ENCODE measurements at regions of chr19 and their contacts with region 1.

Region 1: GRCh38 chr19:10106100-10106936 is at the start of gene PPAN:
- DNase-seq: peak; percentile 95 to 99 (median 98)
- ATAC-seq: peak; percentile 63
- H3K4me3 ChIP-seq: peak within 1 kb of the TSS; percentile 53 to 74
- H3K4me3 Mint-ChIP-seq: peak within 1 kb of the TSS; percentile 89
- H3K27ac ChIP-seq: peak within 1 kb of the TSS; percentile 91 to 93
- H3K27ac Mint-ChIP-seq: peak within 1 kb of the TSS; percentile 93
- H3K4me1 ChIP-seq: peaks cover 61% of the 10 kb centered on the region
- H3K4me1 Mint-ChIP-seq: peaks cover 57% of the 10 kb centered on the region
- H3K27me3 ChIP-seq: no peaks in the 10 kb centered on the region
- H3K27me3 Mint-ChIP-seq: no peaks in the 10 kb centered on the region
- CTCF ChIP-seq: no peak
- total RNA-seq, gene PPAN: 97.6 to 114 TPM

Region 2: GRCh38 chr19:8724276-8724675 is 1382.0 kb before region 1 on chr19:
- CTCF ChIA-PET with region 1: no interaction called
- POLR2A ChIA-PET with region 1: no interaction called
- intact Hi-C with region 1: no loop called
- DNase-seq: no peak
- ATAC-seq: no peak
- H3K4me3 ChIP-seq: no peak overlapping the region
- H3K4me3 Mint-ChIP-seq: no peak overlapping the region
- H3K27ac ChIP-seq: no peak overlapping the region
- H3K27ac Mint-ChIP-seq: no peak overlapping the region
- H3K4me1 ChIP-seq: no peaks in the 10 kb centered on the region
- H3K4me1 Mint-ChIP-seq: no peaks in the 10 kb centered on the region
- H3K27me3 ChIP-seq: no peaks in the 10 kb centered on the region
- H3K27me3 Mint-ChIP-seq: peaks cover 22% of the 10 kb centered on the region
- CTCF ChIP-seq: no peak

Region 3: DNA sequence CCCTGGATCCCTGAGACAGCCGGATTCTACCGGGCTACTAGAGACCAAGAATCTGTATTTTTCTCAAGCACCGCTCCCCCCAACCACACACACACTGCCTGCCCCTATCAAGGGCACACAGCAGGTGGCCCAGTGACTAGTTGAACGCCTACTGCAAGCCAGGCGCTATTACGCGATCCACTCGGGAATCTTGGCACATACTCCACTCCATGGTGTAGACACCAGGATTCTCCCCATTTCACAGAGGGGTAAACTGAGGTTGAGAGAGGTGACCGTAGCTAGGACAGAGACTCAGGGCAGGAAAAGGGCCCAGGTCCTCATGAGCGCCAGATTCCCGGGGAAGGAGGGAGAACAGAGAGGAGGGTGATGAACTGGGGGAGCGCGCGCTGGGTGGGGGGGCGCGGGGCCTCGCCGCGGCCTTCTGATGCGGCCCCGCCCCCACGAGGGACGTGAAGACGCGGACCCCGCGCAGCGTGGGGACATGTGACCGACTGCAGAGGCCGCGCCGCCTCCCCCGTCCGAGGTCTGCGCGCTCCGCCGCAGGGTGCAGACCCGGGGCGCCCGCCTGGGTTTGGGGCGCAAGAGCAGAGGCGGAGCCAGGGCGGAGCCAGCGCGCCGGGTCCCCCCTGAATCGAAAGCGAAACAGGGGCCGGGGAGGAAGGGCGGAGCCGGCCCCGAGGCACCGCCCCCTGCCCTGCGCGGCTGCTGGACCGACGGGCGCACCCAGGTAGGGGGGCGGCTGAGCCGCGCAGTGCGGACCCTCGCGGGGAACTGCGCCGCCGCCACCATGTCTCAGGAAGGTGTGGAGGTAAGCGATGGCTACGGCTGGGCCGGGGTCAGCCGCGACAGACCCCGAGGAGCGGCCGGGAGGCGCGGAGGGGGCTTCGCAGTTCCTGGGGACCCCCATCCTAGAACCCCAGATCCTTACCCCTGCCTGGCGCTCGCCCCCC is 20.4 kb before region 1 on chr19 and contains the start of gene SHFL:
- CTCF ChIA-PET with region 1: no interaction called
- POLR2A ChIA-PET with region 1: interaction called, 3 read pairs
- intact Hi-C with region 1: loop called in 1 of 2 experiments (anchors 1 kb)
- DNase-seq: peak; percentile 70 to 93 (median 83)
- ATAC-seq: peak; percentile 93
- H3K4me3 ChIP-seq: peak within 1 kb of the TSS; percentile 99 to 100
- H3K4me3 Mint-ChIP-seq: peak within 1 kb of the TSS; percentile 87
- H3K27ac ChIP-seq: peak within 1 kb of the TSS; percentile 73 to 88
- H3K27ac Mint-ChIP-seq: peak within 1 kb of the TSS; percentile 90
- H3K4me1 ChIP-seq: peaks cover 6% of the 10 kb centered on the region
- H3K4me1 Mint-ChIP-seq: peaks cover 10% of the 10 kb centered on the region
- H3K27me3 ChIP-seq: no peaks in the 10 kb centered on the region
- H3K27me3 Mint-ChIP-seq: no peaks in the 10 kb centered on the region
- CTCF ChIP-seq: no peak
- total RNA-seq, gene SHFL: 56.4 to 61.6 TPM

Region 4: GRCh38 chr19:10120538-10121189 is 14.3 kb after region 1 on chr19:
- CTCF ChIA-PET with region 1: interaction called, 8 read pairs
- POLR2A ChIA-PET with region 1: interaction called, 39 read pairs
- intact Hi-C with region 1: loop called (anchors 1 kb)
- DNase-seq: no peak
- ATAC-seq: no peak
- H3K4me3 ChIP-seq: no peak overlapping the region
- H3K4me3 Mint-ChIP-seq: peak overlapping the region; percentile 47
- H3K27ac ChIP-seq: no peak overlapping the region
- H3K27ac Mint-ChIP-seq: no peak overlapping the region
- H3K4me1 ChIP-seq: peaks cover 22% of the 10 kb centered on the region
- H3K4me1 Mint-ChIP-seq: peaks cover 29% of the 10 kb centered on the region
- H3K27me3 ChIP-seq: no peaks in the 10 kb centered on the region
- H3K27me3 Mint-ChIP-seq: no peaks in the 10 kb centered on the region
- CTCF ChIP-seq: no peak

Region 5: DNA sequence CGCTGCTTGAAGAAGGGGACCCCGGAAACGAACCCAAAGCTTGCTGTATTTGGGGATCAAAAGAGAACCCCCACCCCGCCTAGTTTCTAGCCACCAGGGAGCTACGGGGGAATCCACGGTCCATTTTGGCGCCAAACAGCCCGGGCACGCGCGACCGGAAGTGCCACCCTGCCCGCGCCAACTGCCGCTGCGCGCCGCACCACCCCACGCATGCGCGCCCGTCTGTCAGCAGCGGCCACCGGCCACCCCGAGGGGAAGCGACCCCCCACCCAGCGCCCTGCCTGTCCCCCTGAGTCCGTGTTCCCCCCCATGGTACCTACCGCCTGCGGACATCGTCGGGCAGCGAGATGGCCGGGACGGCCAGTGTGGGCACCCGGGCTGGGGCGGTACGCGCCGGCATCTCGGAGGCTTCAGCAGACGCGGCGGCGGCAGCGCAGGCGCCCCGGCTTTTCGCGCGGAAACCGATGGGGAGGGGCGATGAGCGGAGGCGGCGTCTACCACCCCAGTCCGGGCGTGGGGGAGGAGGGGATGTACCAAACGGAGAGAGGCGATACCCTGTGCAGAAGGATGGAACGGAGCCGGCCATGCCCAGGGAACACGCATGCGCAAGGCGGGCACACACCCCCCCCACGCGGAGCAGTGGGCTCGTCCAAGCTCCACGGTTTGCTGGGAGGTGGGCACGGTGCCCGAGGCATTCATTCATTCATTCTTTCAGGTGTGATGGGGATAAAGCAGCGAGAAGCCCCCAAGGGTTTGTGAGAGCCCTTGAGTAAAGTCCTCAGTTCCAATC is 88.4 kb after region 1 on chr19 and contains the start of gene DNMT1:
- CTCF ChIA-PET with region 1: no interaction called
- POLR2A ChIA-PET with region 1: interaction called, 3 read pairs
- intact Hi-C with region 1: loop called in 1 of 2 experiments (anchors 5 kb)
- DNase-seq: peak; percentile 92 to 97 (median 95)
- ATAC-seq: peak; percentile 96
- H3K4me3 ChIP-seq: peak within 1 kb of the TSS; percentile 97 to 99
- H3K4me3 Mint-ChIP-seq: peak within 1 kb of the TSS; percentile 96
- H3K27ac ChIP-seq: peak within 1 kb of the TSS; percentile 66 to 76
- H3K27ac Mint-ChIP-seq: peak within 1 kb of the TSS; percentile 91
- H3K4me1 ChIP-seq: peaks cover 16% of the 10 kb centered on the region
- H3K4me1 Mint-ChIP-seq: peaks cover 33% of the 10 kb centered on the region
- H3K27me3 ChIP-seq: no peaks in the 10 kb centered on the region
- H3K27me3 Mint-ChIP-seq: no peaks in the 10 kb centered on the region
- CTCF ChIP-seq: no peak
- total RNA-seq, gene DNMT1: 135 to 154 TPM

Region 6: GRCh38 chr19:10332955-10333757 is 226.8 kb after region 1 on chr19 and contains the start of gene RAVER1:
- CTCF ChIA-PET with region 1: no interaction called
- POLR2A ChIA-PET with region 1: no interaction called
- intact Hi-C with region 1: no loop called
- DNase-seq: peak; percentile 94 to 99 (median 98)
- ATAC-seq: peak; percentile 96
- H3K4me3 ChIP-seq: peak within 1 kb of the TSS; percentile 93 to 97
- H3K4me3 Mint-ChIP-seq: peak within 1 kb of the TSS; percentile 95
- H3K27ac ChIP-seq: peak within 1 kb of the TSS; percentile 76 to 95
- H3K27ac Mint-ChIP-seq: peak within 1 kb of the TSS; percentile 93
- H3K4me1 ChIP-seq: peaks cover 30% of the 10 kb centered on the region
- H3K4me1 Mint-ChIP-seq: peaks cover 35% of the 10 kb centered on the region
- H3K27me3 ChIP-seq: no peaks in the 10 kb centered on the region
- H3K27me3 Mint-ChIP-seq: no peaks in the 10 kb centered on the region
- CTCF ChIP-seq: no peak
- total RNA-seq, gene RAVER1: 33.3 to 33.6 TPM

Region 7: GRCh38 chr19:10602330-10603083 is 496.2 kb after region 1 on chr19:
- CTCF ChIA-PET with region 1: no interaction called
- POLR2A ChIA-PET with region 1: no interaction called
- intact Hi-C with region 1: loop called in 1 of 2 experiments (anchors 2 kb)
- DNase-seq: peak; percentile 79 to 94 (median 86)
- ATAC-seq: peak; percentile 82
- H3K4me3 ChIP-seq: peak overlapping the region; percentile 91 to 99
- H3K4me3 Mint-ChIP-seq: peak overlapping the region; percentile 96
- H3K27ac ChIP-seq: peak overlapping the region; percentile 99 to 100
- H3K27ac Mint-ChIP-seq: peak overlapping the region; percentile 99
- H3K4me1 ChIP-seq: peaks cover 38% of the 10 kb centered on the region
- H3K4me1 Mint-ChIP-seq: peaks cover 29% of the 10 kb centered on the region
- H3K27me3 ChIP-seq: no peaks in the 10 kb centered on the region
- H3K27me3 Mint-ChIP-seq: no peaks in the 10 kb centered on the region
- CTCF ChIP-seq: no peak

Measured in CD8-positive, alpha-beta T cell (primary cell).